CD4-positive, alpha-beta T cell (primary cell): ENCODE measurements at regions of chr19 and their contacts with region 1.

Region 1: DNA sequence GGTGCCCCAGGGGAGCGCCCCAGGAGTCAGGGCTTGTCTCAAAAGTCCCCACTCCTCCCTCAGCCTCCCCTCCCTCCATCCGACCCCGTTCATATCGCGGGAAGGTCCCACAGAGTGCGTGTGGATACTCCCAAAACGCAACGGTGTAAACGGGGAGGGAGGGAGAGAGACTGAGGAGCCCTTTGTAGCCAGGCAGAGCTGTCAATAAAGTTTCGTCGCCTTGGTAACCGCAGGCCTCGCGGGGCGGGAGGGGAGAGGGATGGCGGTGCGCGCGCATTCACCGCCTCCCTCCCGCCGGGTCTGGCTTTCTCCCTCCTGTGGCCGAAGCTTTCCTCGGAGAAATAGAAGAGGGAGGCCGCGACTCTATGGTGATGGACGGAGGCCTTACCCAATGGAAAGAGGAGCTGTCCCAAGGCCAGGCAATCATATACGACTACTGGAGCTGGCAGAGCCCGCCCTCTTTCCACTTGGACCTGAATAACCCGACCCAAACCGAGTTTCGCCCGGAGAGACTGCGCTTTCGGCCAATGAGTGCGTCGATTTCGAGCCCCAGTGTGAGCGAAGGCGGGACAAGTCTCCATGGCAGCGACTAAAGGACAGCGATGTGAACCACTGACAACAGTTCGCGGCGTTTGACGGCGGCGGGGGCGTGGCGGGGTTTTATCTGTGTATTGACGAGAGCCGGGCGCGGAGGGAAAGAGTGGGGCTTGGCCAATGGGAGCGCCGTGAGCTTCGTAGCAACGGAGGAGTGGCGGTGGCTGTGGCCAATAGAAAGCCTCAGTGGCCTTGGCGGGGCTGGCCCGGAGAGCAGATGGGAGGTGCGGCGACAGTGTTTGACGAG is at the start of gene KMT5C:
- DNase-seq: peak; percentile 100
- ATAC-seq: peak; percentile 73
- H3K4me3 ChIP-seq: peak within 1 kb of the TSS; percentile 71
- H3K4me3 Mint-ChIP-seq: peak within 1 kb of the TSS; percentile 98
- H3K27ac ChIP-seq: peak within 1 kb of the TSS; percentile 91 to 98
- H3K27ac Mint-ChIP-seq: peak within 1 kb of the TSS; percentile 99
- H3K4me1 ChIP-seq: peaks cover 32% of the 10 kb centered on the region
- H3K4me1 Mint-ChIP-seq: peaks cover 21% of the 10 kb centered on the region
- H3K27me3 ChIP-seq: peaks cover 3 to 4% of the 10 kb centered on the region in 2 experiments
- H3K27me3 Mint-ChIP-seq: peaks cover 22% of the 10 kb centered on the region
- CTCF ChIP-seq: peak; percentile 30
- total RNA-seq, gene KMT5C: 113 to 115 TPM

Region 2: GRCh38 chr19:55117636-55118391 is 221.5 kb before region 1 on chr19 and contains the start of gene PPP1R12C:
- CTCF ChIA-PET with region 1: no interaction called
- POLR2A ChIA-PET with region 1: interaction called, 10 read pairs
- intact Hi-C with region 1: no loop called
- DNase-seq: peak; percentile 91 to 99 (median 97)
- ATAC-seq: peak; percentile 89
- H3K4me3 ChIP-seq: peak within 1 kb of the TSS; percentile 70
- H3K4me3 Mint-ChIP-seq: peak within 1 kb of the TSS; percentile 93
- H3K27ac ChIP-seq: peak within 1 kb of the TSS; percentile 27 to 44
- H3K27ac Mint-ChIP-seq: peak within 1 kb of the TSS; percentile 86
- H3K4me1 ChIP-seq: peaks cover 47% of the 10 kb centered on the region
- H3K4me1 Mint-ChIP-seq: peaks cover 37% of the 10 kb centered on the region
- H3K27me3 ChIP-seq: no peaks in the 10 kb centered on the region
- H3K27me3 Mint-ChIP-seq: no peaks in the 10 kb centered on the region
- CTCF ChIP-seq: no peak
- total RNA-seq, gene PPP1R12C: 123 to 136 TPM

Region 3: DNA sequence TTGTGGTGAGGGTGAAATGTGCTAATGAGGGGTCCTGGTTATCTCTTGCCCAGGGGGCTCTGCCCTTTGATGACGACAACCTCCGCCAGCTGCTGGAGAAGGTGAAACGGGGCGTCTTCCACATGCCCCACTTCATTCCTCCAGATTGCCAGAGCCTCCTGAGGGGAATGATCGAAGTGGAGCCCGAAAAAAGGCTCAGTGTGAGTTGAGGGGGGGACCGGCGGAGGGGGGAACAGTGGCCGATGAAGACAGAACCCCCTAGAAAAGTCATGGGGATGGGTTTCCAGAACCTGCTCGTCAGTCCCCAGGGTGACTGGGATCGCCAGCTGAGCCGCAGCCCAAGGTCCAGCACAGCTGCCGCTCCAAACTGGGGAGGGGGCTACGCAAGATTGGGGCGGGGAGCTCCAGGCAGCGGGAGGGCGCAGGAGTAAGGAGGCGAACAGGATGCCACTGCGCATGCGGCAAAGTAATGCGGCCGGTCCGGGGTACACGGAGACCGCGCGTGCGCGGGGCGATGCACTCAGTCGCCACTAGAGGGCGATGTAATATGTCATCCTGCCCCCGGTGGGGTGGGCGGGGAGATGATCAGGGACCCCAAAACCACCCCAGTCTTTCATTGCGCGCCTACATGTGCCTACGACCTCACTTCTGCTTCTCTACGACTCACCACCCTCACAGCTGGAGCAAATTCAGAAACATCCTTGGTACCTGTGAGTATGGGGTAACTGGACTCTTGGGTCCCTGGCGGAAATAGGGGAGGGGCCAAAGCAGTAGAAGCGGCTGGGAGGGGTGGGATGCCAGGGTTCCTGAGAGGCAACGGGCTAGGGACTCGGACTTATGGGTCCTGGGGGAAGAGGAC is 37.6 kb before region 1 on chr19:
- CTCF ChIA-PET with region 1: interaction called, 21 read pairs
- POLR2A ChIA-PET with region 1: interaction called, 7 read pairs
- intact Hi-C with region 1: loop called (anchors 1 kb)
- DNase-seq: peak; percentile 87 to 98 (median 94)
- ATAC-seq: peak; percentile 89
- H3K4me3 ChIP-seq: peak overlapping the region; percentile 37
- H3K4me3 Mint-ChIP-seq: peak overlapping the region; percentile 88
- H3K27ac ChIP-seq: no peak overlapping the region
- H3K27ac Mint-ChIP-seq: peak overlapping the region; percentile 61
- H3K4me1 ChIP-seq: peaks cover 21% of the 10 kb centered on the region
- H3K4me1 Mint-ChIP-seq: peaks cover 14% of the 10 kb centered on the region
- H3K27me3 ChIP-seq: no peaks in the 10 kb centered on the region
- H3K27me3 Mint-ChIP-seq: no peaks in the 10 kb centered on the region
- CTCF ChIP-seq: peak; percentile 95

Region 4: GRCh38 chr19:55362174-55362989 is 23.1 kb after region 1 on chr19:
- CTCF ChIA-PET with region 1: no interaction called
- POLR2A ChIA-PET with region 1: no interaction called
- intact Hi-C with region 1: no loop called
- DNase-seq: no peak
- ATAC-seq: no peak
- H3K4me3 ChIP-seq: no peak overlapping the region
- H3K4me3 Mint-ChIP-seq: no peak overlapping the region
- H3K27ac ChIP-seq: no peak overlapping the region
- H3K27ac Mint-ChIP-seq: no peak overlapping the region
- H3K4me1 ChIP-seq: no peaks in the 10 kb centered on the region
- H3K4me1 Mint-ChIP-seq: no peaks in the 10 kb centered on the region
- H3K27me3 ChIP-seq: no peaks in the 10 kb centered on the region
- H3K27me3 Mint-ChIP-seq: peaks cover 8% of the 10 kb centered on the region
- CTCF ChIP-seq: no peak

Region 5: DNA sequence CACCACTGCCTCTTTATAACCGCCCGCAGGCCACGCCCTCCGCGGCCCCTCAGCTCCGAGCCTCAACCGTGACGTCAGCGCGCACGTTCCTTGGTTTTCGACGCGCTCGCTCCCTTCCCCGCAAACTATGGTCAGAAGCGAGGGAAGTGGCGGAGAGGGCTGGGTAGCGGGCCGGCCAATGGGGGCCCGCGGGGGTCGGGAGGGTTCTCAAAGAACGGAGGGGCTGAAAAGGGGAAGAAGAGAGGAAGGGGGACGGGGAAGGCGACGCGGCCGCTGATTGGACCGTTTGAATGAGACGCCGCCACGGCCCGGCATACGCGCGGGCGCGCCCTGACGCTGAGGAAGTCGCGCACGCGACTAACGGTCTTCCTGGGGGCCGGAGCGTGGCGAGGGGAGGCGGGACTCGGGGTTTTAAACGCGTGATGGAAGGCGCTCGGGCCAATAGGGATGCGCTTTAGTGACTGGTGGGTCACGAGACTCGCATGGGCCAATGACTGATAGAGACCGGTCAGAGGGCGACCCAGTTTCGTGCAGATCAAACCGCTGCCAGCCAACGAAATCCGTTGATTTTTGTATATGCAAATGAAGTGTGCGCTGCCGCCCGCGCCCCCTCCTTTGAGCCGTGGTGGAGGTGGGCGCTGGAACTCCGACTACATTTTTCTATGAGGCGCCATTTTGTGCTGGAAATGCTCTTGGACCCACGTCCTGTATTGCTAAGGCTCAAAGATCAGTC is 68.7 kb after region 1 on chr19:
- CTCF ChIA-PET with region 1: no interaction called
- POLR2A ChIA-PET with region 1: interaction called, 28 read pairs
- intact Hi-C with region 1: loop called (anchors 1 to 5 kb)
- DNase-seq: peak; percentile 91 to 99 (median 96)
- ATAC-seq: peak; percentile 92
- H3K4me3 ChIP-seq: peak overlapping the region; percentile 61
- H3K4me3 Mint-ChIP-seq: peak overlapping the region; percentile 94
- H3K27ac ChIP-seq: peak overlapping the region; percentile 96 to 100
- H3K27ac Mint-ChIP-seq: peak overlapping the region; percentile 99
- H3K4me1 ChIP-seq: peaks cover 30% of the 10 kb centered on the region
- H3K4me1 Mint-ChIP-seq: peaks cover 29% of the 10 kb centered on the region
- H3K27me3 ChIP-seq: no peaks in the 10 kb centered on the region
- H3K27me3 Mint-ChIP-seq: no peaks in the 10 kb centered on the region
- CTCF ChIP-seq: no peak

Region 6: DNA sequence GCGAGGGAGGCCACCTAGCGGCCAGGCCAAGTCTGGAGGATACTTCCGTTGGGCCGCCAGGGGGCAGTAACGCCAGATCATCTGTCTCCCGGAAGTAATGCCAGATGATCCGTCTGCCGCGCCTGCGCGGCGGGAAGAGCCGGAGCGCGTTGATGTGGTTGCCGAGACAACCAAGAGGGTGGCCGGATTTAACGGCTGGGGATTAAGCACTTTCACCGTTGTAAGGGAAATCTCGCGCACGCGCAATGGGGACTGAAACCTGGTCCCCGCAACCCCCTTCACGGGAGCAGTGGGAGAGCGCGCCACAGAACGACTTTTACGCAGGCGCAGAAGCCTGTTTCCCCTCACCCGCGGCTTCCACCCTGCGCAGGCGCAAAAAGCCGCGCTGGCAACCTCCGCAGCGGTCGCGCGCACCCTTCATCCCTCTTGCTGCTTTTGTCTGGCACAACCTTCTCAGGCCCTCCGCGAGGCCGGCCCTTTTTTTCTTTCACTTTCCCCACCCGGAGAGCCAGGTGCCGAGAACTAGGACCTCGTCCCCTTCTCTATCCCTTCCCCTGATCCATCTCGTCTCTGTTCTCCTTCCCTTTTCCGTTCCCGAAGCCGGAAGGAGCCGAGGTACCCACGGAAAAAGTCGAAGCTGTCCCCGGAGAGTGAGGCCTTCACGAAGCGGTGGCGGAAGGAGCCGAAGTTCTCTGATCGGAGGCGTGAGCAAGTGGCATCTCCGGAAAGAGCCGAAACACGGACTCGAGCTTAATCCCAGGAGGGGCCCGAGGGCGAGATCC is 314.7 kb after region 1 on chr19:
- CTCF ChIA-PET with region 1: interaction called, 3 read pairs
- POLR2A ChIA-PET with region 1: interaction called, 10 read pairs
- intact Hi-C with region 1: no loop called
- DNase-seq: peak; percentile 98 to 100 (median 100)
- ATAC-seq: peak; percentile 79
- H3K4me3 ChIP-seq: peak overlapping the region; percentile 70
- H3K4me3 Mint-ChIP-seq: peak overlapping the region; percentile 94
- H3K27ac ChIP-seq: peak overlapping the region; percentile 96 to 100
- H3K27ac Mint-ChIP-seq: peak overlapping the region; percentile 93
- H3K4me1 ChIP-seq: peaks cover 46% of the 10 kb centered on the region
- H3K4me1 Mint-ChIP-seq: peaks cover 43% of the 10 kb centered on the region
- H3K27me3 ChIP-seq: no peaks in the 10 kb centered on the region
- H3K27me3 Mint-ChIP-seq: no peaks in the 10 kb centered on the region
- CTCF ChIP-seq: peak; percentile 100